ENCODE measurements at regions of chr2 and their contacts with region 1.

Region 1: GRCh38 chr2:192286093-192286701 is 91.5 kb upstream of the TMEFF2 start:
- DNase-seq: peak; percentile 68
- H3K4me3 ChIP-seq: no peak overlapping the region
- H3K27ac ChIP-seq: no peak overlapping the region
- H3K4me1 ChIP-seq: no peaks in the 10 kb centered on the region
- H3K27me3 ChIP-seq: no peaks in the 10 kb centered on the region

Region 2: GRCh38 chr2:190950566-190950991 is 1335.6 kb before region 1 on chr2:
- in situ Hi-C with region 1: no loop called
- DNase-seq: no peak
- H3K4me3 ChIP-seq: no peak overlapping the region
- H3K27ac ChIP-seq: peak overlapping the region; percentile 17; the same call in 1 of the 2 replicates
- H3K4me1 ChIP-seq: peaks cover 35% of the 10 kb centered on the region
- H3K27me3 ChIP-seq: no peaks in the 10 kb centered on the region

Region 3: DNA sequence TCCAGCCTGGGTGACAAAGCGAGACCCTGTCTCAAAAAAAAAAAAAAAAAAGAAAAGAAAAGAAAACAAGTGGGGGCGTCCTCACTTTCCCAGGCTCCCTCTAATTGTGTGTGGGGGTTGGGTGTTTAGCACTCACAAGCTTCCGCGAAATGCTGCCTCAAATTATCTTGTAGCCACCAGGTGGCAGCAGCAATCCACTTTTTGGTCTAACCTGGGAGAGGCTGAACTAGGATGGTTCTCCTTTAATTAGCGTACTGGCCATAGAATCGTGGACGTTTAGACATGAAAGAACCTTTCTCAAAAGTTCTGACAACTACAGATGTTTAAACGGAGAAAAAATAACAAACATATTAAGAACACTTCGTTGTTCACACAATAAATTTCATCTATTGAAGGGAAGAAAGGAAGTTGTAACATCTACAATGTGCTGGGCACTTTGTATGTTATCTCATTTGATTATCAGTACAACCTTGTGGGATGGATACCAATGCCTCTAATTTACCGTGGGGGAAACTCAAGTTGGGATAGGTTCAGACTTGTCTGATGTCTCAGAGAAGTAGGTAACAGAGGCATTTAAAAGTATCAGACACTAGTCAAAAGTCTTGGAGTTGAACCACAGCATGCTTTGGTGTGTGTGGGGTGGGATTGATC is 731.0 kb before region 1 on chr2:
- in situ Hi-C with region 1: loop called (anchors 25 kb)
- DNase-seq: peak; percentile 82
- H3K4me3 ChIP-seq: no peak overlapping the region
- H3K27ac ChIP-seq: no peak overlapping the region
- H3K4me1 ChIP-seq: peaks cover 3% of the 10 kb centered on the region; the same call in 1 of the 2 replicates
- H3K27me3 ChIP-seq: no peaks in the 10 kb centered on the region